Endothelial cell of umbilical vein (primary cell): ENCODE measurements at regions of chr1 and their contacts with region 1.

Region 1: GRCh38 chr1:72023063-72023930 is 259.0 kb downstream of the NEGR1 start:
- DNase-seq: no peak
- H3K4me3 ChIP-seq: no peak overlapping the region
- H3K27ac ChIP-seq: no peak overlapping the region
- H3K4me1 ChIP-seq: no peaks in the 10 kb centered on the region
- H3K27me3 ChIP-seq: no peaks in the 10 kb centered on the region
- CTCF ChIP-seq: no peak
- POLR2A ChIP-seq: no peak

Region 2: DNA sequence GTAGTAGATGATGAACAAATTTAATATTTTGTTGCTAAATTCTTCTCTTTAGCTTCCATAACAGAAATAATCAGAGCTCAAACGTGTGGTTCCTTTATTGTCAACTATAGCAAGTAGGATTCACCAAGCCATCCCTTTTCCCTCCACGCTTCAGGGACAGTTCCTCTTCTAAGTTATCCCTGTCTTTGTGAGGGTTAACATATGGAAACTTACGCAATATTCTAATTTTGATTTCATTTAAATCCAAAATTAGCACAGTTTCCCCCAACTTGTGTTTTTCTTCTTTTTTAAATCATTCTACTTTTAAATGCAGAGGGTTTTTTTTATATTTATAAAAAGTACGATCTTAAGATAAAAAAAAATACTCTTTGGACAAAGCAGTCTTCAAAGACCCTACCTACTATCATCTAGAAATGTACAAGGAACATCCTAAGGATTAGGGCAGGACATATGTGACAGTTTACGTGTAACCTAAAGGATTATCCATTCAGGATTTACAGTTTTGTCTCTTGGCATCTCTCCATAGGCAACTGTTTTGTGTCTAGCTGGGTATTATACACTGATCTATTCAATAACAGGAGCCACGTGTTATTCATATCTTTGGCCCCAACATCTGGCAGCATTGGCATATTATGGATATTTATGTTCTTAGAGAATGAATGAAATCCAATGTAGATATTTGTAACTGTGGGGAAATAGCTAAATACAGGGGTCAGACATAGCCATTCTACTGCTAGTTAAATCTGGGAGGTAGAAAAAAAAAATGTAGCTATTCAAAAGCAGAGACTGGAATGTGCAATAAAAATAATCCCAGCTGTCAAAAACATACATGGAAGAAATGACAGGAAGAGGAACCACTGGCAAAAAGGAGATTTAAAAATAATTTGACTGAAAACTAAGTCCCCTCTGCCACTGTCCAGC is 13.9 kb before region 1 on chr1:
- CTCF ChIA-PET with region 1: interaction called, 3 read pairs
- POLR2A ChIA-PET with region 1: no interaction called
- dilution Hi-C with region 1: no loop called
- intact Hi-C with region 1: loop called (anchors 1 kb)
- DNase-seq: peak; percentile 26
- H3K4me3 ChIP-seq: no peak overlapping the region
- H3K27ac ChIP-seq: no peak overlapping the region
- H3K4me1 ChIP-seq: no peaks in the 10 kb centered on the region
- H3K27me3 ChIP-seq: no peaks in the 10 kb centered on the region
- CTCF ChIP-seq: no peak
- POLR2A ChIP-seq: no peak

Region 3: DNA sequence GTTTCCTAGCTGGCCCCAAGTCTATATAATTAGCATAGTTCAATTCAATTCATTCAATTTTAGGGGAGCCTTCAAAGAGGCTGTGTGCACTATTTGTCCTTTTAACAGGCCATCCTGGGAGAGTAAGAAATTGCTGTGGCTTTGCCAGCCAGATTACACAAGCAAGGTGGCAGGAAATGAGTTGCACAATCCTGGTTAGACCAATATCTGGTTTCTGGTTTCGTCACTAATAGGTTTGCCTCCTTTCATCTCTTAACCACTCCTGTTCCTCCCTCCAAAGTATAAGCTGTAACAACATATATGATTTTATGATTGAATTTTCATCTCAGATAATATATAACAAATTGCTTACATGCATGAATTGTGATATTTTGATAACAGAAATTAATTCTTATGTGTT is 343.2 kb after region 1 on chr1:
- CTCF ChIA-PET with region 1: no interaction called
- POLR2A ChIA-PET with region 1: no interaction called
- dilution Hi-C with region 1: no loop called
- intact Hi-C with region 1: no loop called
- DNase-seq: peak; percentile 4
- H3K4me3 ChIP-seq: no peak overlapping the region
- H3K27ac ChIP-seq: no peak overlapping the region
- H3K4me1 ChIP-seq: no peaks in the 10 kb centered on the region
- H3K27me3 ChIP-seq: no peaks in the 10 kb centered on the region
- CTCF ChIP-seq: no peak
- POLR2A ChIP-seq: no peak